ENCODE measurements at regions of chr14 and their contacts with region 1.

Region 1: DNA sequence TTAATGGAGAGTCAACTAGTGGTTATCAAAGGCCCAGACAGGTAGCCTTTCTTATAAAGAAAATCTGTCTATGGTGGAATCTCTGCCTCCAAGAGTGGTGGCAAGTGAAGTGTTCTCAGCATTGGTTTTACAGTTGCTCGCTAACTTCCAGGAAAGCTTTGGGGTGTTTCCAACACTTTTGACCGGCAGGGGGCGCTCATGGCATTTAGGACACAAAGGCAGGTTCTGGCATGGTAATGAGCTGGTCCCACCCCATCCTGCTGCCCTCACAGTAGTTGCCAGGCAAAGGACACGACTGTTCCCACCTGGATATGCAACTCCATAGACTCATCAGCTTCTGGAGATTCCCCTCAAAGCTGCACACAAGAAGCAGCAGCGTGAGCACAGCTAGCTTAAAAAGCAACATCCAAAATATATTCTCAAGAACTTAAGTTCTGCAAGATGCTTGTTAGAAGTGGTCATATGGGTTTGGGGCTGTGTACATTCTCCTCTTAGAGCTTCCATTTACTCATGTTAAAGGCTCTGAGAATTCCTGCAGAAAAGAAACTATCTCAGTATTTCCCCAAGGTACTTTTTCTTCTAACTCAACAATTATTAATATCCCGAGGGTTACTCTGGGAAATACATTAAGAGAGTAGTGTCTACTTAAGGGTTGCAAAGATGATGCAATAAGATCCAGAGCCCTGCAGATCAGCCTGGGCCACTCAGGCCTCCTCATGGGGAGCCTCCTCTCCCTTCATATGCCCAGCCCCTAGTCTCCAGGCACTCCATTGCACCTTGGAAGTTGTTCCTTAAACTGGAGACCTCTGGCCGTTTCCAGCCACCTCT is 14.8 kb downstream of the PROX2 start:
- DNase-seq: peak; percentile 86 to 89
- H3K4me3 ChIP-seq: no peak overlapping the region
- H3K4me3 Mint-ChIP-seq: no peak overlapping the region
- H3K27ac Mint-ChIP-seq: no peak overlapping the region
- H3K4me1 ChIP-seq: no peaks in the 10 kb centered on the region
- H3K4me1 Mint-ChIP-seq: no peaks in the 10 kb centered on the region
- H3K27me3 ChIP-seq: no peaks in the 10 kb centered on the region
- H3K27me3 Mint-ChIP-seq: peaks cover 4% of the 10 kb centered on the region
- CTCF ChIP-seq: peak; percentile 79 to 80

Region 2: DNA sequence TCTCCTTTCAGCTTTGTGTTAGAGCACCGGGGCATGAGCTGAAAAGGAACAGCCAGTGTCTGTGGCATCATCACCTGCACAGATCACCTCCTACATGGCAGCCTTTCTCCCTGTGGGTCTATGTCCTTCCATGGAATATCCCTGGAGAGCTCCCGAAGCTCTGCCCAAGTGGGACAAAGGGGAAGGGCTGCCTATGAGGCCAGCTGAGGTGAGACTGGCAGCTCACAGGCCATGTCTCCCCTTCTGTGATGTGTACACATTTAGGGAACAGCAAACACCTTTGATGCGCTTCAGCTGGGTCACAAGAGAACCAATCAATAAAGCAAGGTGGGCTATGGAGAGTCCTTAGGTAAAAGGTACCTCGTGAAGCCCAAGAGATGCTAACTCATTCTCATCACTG is 10.7 kb after region 1 on chr14:
- CTCF ChIA-PET with region 1: interaction called, 23 read pairs
- POLR2A ChIA-PET with region 1: no interaction called
- intact Hi-C with region 1: no loop called
- DNase-seq: no peak
- H3K4me3 ChIP-seq: no peak overlapping the region
- H3K4me3 Mint-ChIP-seq: no peak overlapping the region
- H3K27ac Mint-ChIP-seq: no peak overlapping the region
- H3K4me1 ChIP-seq: no peaks in the 10 kb centered on the region
- H3K4me1 Mint-ChIP-seq: no peaks in the 10 kb centered on the region
- H3K27me3 ChIP-seq: no peaks in the 10 kb centered on the region
- H3K27me3 Mint-ChIP-seq: peaks cover 7% of the 10 kb centered on the region
- CTCF ChIP-seq: no peak

Region 3: DNA sequence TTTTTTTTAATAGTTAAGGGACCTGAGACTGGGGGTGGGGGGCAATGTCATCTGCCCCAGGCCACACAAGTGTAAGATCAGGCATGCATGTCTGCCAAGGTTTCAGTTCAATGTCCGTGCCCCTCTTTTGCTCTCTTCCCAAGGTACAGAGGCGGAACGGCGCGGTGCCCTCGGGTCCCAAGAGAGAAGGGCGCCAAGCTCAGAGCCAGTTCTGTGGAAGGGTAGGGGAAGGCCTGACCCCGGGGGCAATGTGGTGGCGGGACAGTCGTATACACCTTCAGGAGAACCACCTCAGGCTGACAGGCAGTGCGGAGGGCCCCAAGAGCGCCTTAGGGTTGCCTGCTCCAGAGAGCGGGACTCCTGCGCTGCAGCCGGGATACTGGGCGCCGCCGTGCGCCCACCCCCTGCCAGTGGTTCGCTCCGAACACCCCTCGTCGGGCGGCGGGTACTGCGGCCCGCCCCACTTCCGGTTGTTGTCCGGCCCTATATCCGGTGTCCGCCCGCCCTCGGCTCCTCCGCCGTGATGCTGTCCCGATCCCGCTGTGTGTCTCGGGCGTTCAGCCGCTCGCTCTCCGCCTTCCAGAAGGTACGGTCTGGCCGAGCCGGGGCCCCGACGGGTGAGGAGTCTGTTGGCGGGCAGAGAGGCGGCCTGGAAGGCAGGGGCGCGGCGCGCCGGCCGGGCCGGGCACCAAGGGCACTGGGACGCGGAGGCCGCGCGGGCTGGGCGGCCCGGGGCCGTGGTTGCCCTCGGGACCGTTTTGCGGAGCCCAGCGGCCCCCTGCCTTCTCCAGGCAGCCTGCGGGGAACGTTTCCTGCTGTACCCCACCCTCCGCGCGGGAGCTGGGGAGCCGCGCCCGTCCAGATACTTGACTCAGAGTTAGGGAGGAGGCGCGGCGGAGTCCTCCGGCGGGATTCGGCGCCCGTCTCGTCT is 20.6 kb after region 1 on chr14 and contains the start of gene DLST:
- CTCF ChIA-PET with region 1: interaction called, 37 read pairs
- POLR2A ChIA-PET with region 1: no interaction called
- intact Hi-C with region 1: no loop called
- DNase-seq: peak; percentile 89 to 94
- H3K4me3 ChIP-seq: peak within 1 kb of the TSS; percentile 93
- H3K4me3 Mint-ChIP-seq: peak within 1 kb of the TSS; percentile 95
- H3K27ac Mint-ChIP-seq: peak within 1 kb of the TSS; percentile 91
- H3K4me1 ChIP-seq: peaks cover 19% of the 10 kb centered on the region
- H3K4me1 Mint-ChIP-seq: peaks cover 44% of the 10 kb centered on the region
- H3K27me3 ChIP-seq: no peaks in the 10 kb centered on the region
- H3K27me3 Mint-ChIP-seq: no peaks in the 10 kb centered on the region
- CTCF ChIP-seq: no peak
- total RNA-seq, gene DLST: 81.4 and 88.1 TPM in 2 replicates

Region 4: GRCh38 chr14:74905375-74906142 is 44.4 kb after region 1 on chr14:
- CTCF ChIA-PET with region 1: interaction called, 122 read pairs
- POLR2A ChIA-PET with region 1: no interaction called
- intact Hi-C with region 1: loop called (anchors 1 kb)
- DNase-seq: peak; percentile 69 to 83
- H3K4me3 ChIP-seq: no peak overlapping the region
- H3K4me3 Mint-ChIP-seq: no peak overlapping the region
- H3K27ac Mint-ChIP-seq: no peak overlapping the region
- H3K4me1 ChIP-seq: no peaks in the 10 kb centered on the region
- H3K4me1 Mint-ChIP-seq: no peaks in the 10 kb centered on the region
- H3K27me3 ChIP-seq: no peaks in the 10 kb centered on the region
- H3K27me3 Mint-ChIP-seq: no peaks in the 10 kb centered on the region
- CTCF ChIP-seq: peak; percentile 92 to 95

Region 5: GRCh38 chr14:74922739-74923401 is 61.8 kb after region 1 on chr14 and contains the start of gene RPS6KL1:
- CTCF ChIA-PET with region 1: interaction called, 18 read pairs
- POLR2A ChIA-PET with region 1: no interaction called
- intact Hi-C with region 1: no loop called
- DNase-seq: peak; percentile 80 to 87
- H3K4me3 ChIP-seq: peak within 1 kb of the TSS; percentile 75
- H3K4me3 Mint-ChIP-seq: peak within 1 kb of the TSS; percentile 84
- H3K27ac Mint-ChIP-seq: no peak within 1 kb of the TSS
- H3K4me1 ChIP-seq: no peaks in the 10 kb centered on the region
- H3K4me1 Mint-ChIP-seq: peaks cover 6% of the 10 kb centered on the region
- H3K27me3 ChIP-seq: no peaks in the 10 kb centered on the region; the same call in 1 of the 2 replicates
- H3K27me3 Mint-ChIP-seq: peaks cover 5% of the 10 kb centered on the region
- CTCF ChIP-seq: no peak
- total RNA-seq, gene RPS6KL1: 6.8 and 9.8 TPM in 2 replicates